ENCODE measurements at regions of chr1 and their contacts with region 1.

Region 1: DNA sequence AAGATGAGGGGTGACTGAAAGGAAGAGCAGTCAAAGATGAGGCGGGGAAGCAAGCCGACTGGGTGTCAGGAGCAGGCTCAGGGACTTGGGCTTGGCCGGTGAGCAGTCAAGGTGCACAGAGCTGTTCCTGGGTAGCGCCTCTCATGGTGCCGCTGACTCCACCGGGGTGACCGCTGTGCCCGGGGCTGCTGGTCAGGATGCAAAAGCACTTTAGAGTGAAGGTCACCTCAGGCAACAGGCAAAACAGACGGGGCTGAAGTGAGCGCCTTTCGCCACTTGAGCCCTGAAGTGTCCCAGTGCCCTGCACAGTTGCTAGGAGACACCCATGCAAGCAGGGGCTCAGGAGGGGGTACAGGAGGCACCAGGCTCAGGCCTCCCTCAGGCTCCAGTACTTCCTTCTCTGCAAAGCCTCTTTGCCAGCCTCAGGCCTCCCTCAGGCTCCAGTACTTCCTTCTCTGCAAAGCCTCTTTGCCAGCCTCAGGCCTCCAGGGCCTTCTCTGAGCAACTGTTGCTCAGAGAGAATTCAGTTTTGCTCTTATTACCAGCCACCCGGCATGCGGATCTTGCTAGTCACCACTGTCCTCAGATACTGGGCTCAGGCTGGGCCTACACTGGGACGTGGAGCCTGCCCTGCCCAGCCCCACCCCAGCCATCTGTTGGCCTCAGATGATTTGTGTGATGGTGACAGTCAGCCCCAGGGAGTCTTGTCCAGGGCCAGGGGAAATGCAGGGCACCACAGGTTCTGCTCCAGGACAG is 99.7 kb upstream of the IRF2BP2 start:
- DNase-seq: no peak
- H3K4me3 Mint-ChIP-seq: no peak overlapping the region
- H3K27ac Mint-ChIP-seq: no peak overlapping the region
- H3K4me1 Mint-ChIP-seq: peaks cover 21% of the 10 kb centered on the region
- H3K27me3 Mint-ChIP-seq: no peaks in the 10 kb centered on the region

Region 2: GRCh38 chr1:234631721-234632125 is 77.9 kb before region 1 on chr1:
- intact Hi-C with region 1: loop called (anchors 5 kb)
- DNase-seq: no peak
- H3K4me3 Mint-ChIP-seq: no peak overlapping the region
- H3K27ac Mint-ChIP-seq: no peak overlapping the region
- H3K4me1 Mint-ChIP-seq: peaks cover 3% of the 10 kb centered on the region
- H3K27me3 Mint-ChIP-seq: no peaks in the 10 kb centered on the region

Region 3: DNA sequence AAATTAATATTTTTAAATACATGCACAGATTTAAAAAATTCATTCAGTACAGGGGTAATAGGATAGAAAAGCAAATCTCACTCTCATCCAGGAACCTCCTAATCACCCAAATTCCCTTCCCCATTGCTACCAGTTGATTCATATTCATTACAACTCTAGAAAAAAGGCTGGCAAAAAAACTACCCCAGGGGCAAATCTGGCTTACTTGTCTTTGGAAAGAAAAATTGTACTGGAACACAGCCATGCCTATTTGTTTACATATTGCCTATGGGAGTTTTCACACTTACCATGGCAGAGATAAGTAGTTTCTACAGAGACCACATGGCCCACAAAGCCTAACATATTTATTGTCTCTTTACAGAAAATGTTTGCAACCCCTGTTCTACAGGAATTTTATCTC is 460.3 kb after region 1 on chr1:
- intact Hi-C with region 1: no loop called
- DNase-seq: no peak
- H3K4me3 Mint-ChIP-seq: no peak overlapping the region
- H3K27ac Mint-ChIP-seq: no peak overlapping the region
- H3K4me1 Mint-ChIP-seq: no peaks in the 10 kb centered on the region
- H3K27me3 Mint-ChIP-seq: no peaks in the 10 kb centered on the region

Measured in activated T-helper 2 cell treated with anti-CD3 and anti-CD28 coated beads, Interferon-gamma antibody, Interleukin-2, Interleukin-4, amounts not matched to agents 10 μg/mL and 5 μg/mL and 100 μg/mL, durations not matched to agents 14 hours and 24 hours and 36 hours (primary cell).